Ascending aorta (tissue), 2 donors: ENCODE measurements at regions of chr17 and their contacts with region 1.

Region 1: DNA sequence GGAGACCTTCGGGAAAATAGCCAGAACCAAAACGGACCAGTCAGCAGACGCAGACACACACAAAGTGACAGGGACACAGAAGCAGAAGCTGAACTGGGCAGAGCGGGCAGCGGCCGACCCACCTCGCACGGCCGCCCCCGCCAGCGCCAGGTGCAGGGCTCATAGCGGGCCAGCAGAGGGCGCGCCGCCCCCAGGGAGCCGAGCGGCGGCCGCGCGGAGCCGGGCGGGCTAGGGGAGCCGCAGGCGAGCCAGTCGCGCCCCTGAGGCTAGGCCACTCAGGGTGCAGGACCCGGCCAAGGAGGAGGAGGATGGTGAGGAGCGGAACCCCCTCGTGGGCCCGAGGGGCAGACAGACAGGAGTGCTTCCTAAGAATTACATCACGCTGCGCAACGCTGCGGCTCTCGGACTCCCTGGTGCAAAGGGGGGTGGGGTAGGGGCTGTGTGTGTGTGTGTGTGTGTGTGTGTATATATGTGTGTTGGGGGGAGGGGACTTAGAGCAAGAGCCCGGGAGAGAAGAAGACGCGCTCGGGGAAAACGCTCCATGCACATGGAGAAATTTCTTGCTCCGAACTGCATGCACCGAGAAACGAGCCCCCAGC is 913 bp upstream of the NOG start:
- DNase-seq: peak in 1 of 2 donors; percentile 71
- H3K4me3 ChIP-seq: peak overlapping the region; percentile 62 to 66
- H3K27ac ChIP-seq: no peak overlapping the region
- H3K4me1 ChIP-seq: peaks cover 3 to 32% of the 10 kb centered on the region in 2 donors
- H3K27me3 ChIP-seq: no peaks in the 10 kb centered on the region
- CTCF ChIP-seq: peak; percentile 52 to 92 (median 69)

Region 2: GRCh38 chr17:56679115-56679766 is 86.7 kb after region 1 on chr17:
- intact Hi-C with region 1: loop called (anchors 2 kb)
- DNase-seq: no peak
- H3K4me3 ChIP-seq: peak overlapping the region; percentile 12 to 52
- H3K27ac ChIP-seq: no peak overlapping the region
- H3K4me1 ChIP-seq: no peaks in the 10 kb centered on the region
- H3K27me3 ChIP-seq: peaks cover 6% of the 10 kb centered on the region
- CTCF ChIP-seq: peak in 2 of 3 experiments; percentile 26 to 58

Region 3: DNA sequence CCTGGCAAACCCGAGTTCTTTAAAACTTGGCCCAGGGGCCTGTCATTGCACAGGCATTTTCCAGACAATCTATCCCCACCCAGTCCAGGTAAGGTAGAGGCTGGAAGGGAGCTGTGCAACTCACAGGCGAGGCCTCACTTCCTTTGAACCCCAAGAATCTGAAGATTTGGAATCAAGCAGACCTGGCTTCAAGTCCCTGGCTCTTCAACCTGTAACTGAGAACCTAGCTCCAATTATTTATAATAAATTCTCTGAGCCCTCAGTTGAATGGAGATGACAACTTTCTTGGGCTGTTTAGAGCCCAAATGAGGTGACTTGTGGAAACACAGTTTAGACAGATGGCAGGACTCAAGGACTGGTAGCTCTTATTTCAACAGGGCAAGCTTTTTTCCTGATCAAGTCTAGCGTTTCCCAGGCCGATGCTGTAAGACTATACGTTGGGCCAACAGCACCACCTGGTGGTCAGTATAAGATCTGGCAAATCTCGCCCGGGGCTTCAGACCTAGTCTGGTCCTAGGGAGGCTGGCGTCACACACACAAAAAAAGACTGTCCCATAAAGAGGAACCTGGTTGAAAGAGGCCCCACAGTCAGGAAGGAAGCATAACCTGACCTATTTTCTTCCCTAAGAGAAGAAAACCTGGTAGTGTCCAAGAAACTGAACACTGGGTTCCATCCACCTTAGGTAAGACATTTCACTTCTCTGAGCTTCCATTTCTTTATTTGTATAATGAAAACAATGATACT is 123.2 kb after region 1 on chr17:
- intact Hi-C with region 1: loop called (anchors 1 kb)
- DNase-seq: peak; percentile 50 to 89
- H3K4me3 ChIP-seq: no peak overlapping the region
- H3K27ac ChIP-seq: no peak overlapping the region
- H3K4me1 ChIP-seq: no peaks in the 10 kb centered on the region
- H3K27me3 ChIP-seq: no peaks in the 10 kb centered on the region
- CTCF ChIP-seq: peak; percentile 50 to 77 (median 74)

Region 4: GRCh38 chr17:56737366-56738161 is 145.0 kb after region 1 on chr17:
- intact Hi-C with region 1: no loop called
- DNase-seq: no peak
- H3K4me3 ChIP-seq: no peak overlapping the region
- H3K27ac ChIP-seq: no peak overlapping the region
- H3K4me1 ChIP-seq: no peaks in the 10 kb centered on the region
- H3K27me3 ChIP-seq: no peaks in the 10 kb centered on the region
- CTCF ChIP-seq: no peak

Region 5: GRCh38 chr17:56779898-56780733 is 187.5 kb after region 1 on chr17:
- intact Hi-C with region 1: loop called (anchors 2 kb)
- DNase-seq: peak in 1 of 2 donors; percentile 83
- H3K4me3 ChIP-seq: peak overlapping the region; percentile 43 to 54
- H3K27ac ChIP-seq: no peak overlapping the region
- H3K4me1 ChIP-seq: peaks cover 0 to 3% of the 10 kb centered on the region in 2 donors
- H3K27me3 ChIP-seq: no peaks in the 10 kb centered on the region
- CTCF ChIP-seq: peak; percentile 85 to 99 (median 98)